Cardiac septum (tissue), 1 donor: ENCODE measurements at regions of chr3 and their contacts with region 1.

Region 1: DNA sequence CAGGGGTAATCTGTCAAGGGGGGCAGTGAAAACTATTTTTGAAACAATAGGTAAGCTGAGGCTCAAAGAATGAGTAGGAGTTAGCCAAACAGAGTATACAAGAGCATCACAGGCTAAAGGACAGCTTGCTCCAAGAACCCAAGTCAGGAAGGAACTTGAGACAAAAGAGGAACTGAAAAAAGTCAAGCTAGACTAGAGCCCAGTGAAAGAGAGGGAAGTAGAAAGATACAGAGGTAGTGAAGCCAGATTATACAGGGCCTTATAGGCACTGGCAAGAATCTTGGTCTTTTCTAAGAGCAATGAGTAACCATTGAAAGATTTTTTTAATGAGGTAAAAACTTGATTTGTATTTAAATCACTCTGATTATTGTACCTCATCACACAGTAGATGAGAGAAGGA is 69.9 kb downstream of the FILIP1L start:
- DNase-seq: no peak

Region 2: DNA sequence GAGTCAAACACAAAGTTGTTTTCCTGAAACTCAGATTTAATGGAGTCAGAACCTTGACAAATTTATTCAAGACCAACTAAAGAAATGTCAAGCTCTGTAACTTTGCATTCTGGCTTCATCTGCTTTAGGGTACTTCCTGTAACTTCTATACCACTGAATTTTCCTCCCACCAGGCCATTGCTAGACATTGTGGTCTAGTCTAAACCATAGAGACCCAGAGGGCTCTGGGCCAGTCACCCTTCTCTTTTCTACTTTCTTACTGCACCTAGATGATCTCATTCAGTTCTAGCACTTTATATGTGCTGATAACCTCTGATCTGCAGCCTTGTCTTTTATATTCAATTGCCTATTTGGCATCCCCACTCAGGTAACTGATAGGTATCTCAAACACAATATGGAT is 1584.1 kb before region 1 on chr3:
- intact Hi-C with region 1: no loop called
- DNase-seq: no peak

Region 3: GRCh38 chr3:99875929-99876841 is 168.2 kb before region 1 on chr3:
- intact Hi-C with region 1: loop called (anchors 2 kb)
- DNase-seq: peak; percentile 94

Region 4: GRCh38 chr3:99943931-99944761 is 100.2 kb before region 1 on chr3:
- intact Hi-C with region 1: loop called (anchors 5 kb)
- DNase-seq: no peak

Region 5: GRCh38 chr3:100006570-100007271 is 37.6 kb before region 1 on chr3:
- intact Hi-C with region 1: loop called (anchors 2 kb)
- DNase-seq: no peak